ENCODE measurements at regions of chr9 and their contacts with region 1.

Region 1: GRCh38 chr9:4923580-4924544 is 61.2 kb upstream of the JAK2 start:
- DNase-seq: no peak
- ATAC-seq: peak; percentile 92
- H3K4me3 ChIP-seq: no peak overlapping the region
- H3K27ac ChIP-seq: no peak overlapping the region
- H3K4me1 ChIP-seq: peaks cover 7% of the 10 kb centered on the region; the same call in 1 of the 2 replicates
- H3K27me3 ChIP-seq: no peaks in the 10 kb centered on the region
- CTCF ChIP-seq: peak; percentile 55 to 70 (median 55)
- EP300 ChIP-seq: no peak
- POLR2A ChIP-seq: no peak
- RAD21 ChIP-seq: peak; percentile 78

Region 2: DNA sequence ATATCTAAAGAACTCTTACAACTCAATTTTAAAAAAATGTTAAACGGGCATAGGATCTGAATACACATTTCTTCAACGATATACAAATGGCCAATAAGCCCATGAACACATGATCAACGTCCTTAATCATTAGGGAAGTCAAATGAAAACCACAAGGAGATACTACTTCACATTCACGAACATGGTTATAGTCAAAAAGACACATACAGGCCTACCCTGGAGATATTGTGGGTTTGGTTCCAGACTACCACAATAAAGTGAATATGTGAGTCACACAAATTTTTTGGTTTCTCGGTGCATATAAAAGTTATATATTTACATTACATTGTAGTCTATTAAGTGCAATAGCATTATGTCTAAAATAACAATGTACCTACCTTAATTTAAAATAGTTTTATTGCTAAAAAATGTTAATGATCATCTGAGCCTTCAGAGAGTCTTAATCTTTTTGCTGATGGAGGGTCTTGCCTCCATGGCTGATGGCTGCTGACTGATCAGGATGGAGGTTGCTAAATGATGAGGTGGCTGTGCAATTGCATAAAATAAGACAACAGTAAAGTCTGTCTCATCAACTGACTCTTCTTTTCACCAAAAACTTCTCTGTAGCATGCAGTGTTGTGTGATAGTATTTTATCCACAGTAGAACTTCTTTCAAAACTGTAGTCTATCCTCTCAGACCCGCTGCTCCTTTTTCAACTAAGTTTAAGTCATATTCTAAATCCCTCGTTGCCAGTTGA is 198.0 kb before region 1 on chr9:
- CTCF ChIA-PET with region 1: no interaction called
- POLR2A ChIA-PET with region 1: no interaction called
- RAD21 ChIA-PET with region 1: no interaction called
- SMC1A ChIA-PET with region 1: no interaction called
- in situ Hi-C with region 1: no loop called
- intact Hi-C with region 1: no loop called
- DNase-seq: no peak
- ATAC-seq: peak; percentile 42; the same call in 1 of the 3 replicates
- H3K4me3 ChIP-seq: no peak overlapping the region
- H3K27ac ChIP-seq: no peak overlapping the region
- H3K4me1 ChIP-seq: 0 out of 2 replicates have a peak, but pooled peaks cover 4% of the 10 kb centered on the region
- H3K27me3 ChIP-seq: no peaks in the 10 kb centered on the region
- CTCF ChIP-seq: no peak
- EP300 ChIP-seq: no peak
- POLR2A ChIP-seq: no peak
- RAD21 ChIP-seq: no peak

Region 3: DNA sequence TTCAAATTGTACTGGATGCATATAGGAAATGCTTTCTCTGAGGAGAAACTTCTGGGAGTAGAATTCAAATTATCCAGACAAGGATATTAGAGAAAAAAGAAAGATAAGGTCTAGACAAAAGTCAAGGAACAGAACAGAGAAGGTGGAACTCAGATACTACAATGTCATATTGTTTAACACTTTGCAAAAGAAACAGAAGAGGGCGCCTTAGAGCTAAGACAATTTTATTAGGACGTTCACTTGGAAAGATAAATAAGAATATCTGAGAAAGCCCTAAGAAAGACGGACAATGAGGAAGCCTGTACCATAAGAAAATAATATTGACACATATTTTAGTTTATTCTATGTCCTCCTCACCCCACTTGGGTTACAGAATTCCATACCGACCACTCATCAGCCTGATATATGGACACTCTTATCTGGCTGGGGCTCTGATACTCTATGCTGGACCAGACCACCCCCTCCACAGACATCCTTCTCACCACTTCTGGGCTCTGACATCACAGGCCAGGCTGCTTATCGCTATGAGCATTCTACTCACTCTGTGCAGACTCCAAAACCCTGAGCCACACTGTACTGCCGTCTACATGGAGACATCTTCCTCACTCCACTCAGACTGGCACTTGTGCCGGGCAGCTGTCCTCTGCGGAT is 173.7 kb before region 1 on chr9:
- CTCF ChIA-PET with region 1: interaction called, 15 read pairs
- POLR2A ChIA-PET with region 1: no interaction called
- RAD21 ChIA-PET with region 1: interaction called, 3 read pairs
- SMC1A ChIA-PET with region 1: interaction called, 7 read pairs
- in situ Hi-C with region 1: no loop called
- intact Hi-C with region 1: no loop called
- DNase-seq: no peak
- ATAC-seq: peak; percentile 86
- H3K4me3 ChIP-seq: no peak overlapping the region
- H3K27ac ChIP-seq: no peak overlapping the region
- H3K4me1 ChIP-seq: peaks cover 4% of the 10 kb centered on the region; the same call in 1 of the 2 replicates
- H3K27me3 ChIP-seq: no peaks in the 10 kb centered on the region
- CTCF ChIP-seq: peak; percentile 54 to 59 (median 58); a peak in 5 of 6 replicates
- EP300 ChIP-seq: no peak
- POLR2A ChIP-seq: no peak
- RAD21 ChIP-seq: peak; percentile 72

Region 4: GRCh38 chr9:4769321-4770080 is 154.4 kb before region 1 on chr9:
- CTCF ChIA-PET with region 1: interaction called, 15 read pairs
- POLR2A ChIA-PET with region 1: no interaction called
- RAD21 ChIA-PET with region 1: interaction called, 4 read pairs
- SMC1A ChIA-PET with region 1: interaction called, 33 read pairs
- in situ Hi-C with region 1: no loop called
- intact Hi-C with region 1: no loop called
- DNase-seq: no peak
- ATAC-seq: peak; percentile 68
- H3K4me3 ChIP-seq: no peak overlapping the region
- H3K27ac ChIP-seq: no peak overlapping the region
- H3K4me1 ChIP-seq: peaks cover 5% of the 10 kb centered on the region; the same call in 1 of the 2 replicates
- H3K27me3 ChIP-seq: no peaks in the 10 kb centered on the region
- CTCF ChIP-seq: no peak
- EP300 ChIP-seq: no peak
- POLR2A ChIP-seq: no peak
- RAD21 ChIP-seq: no peak

Region 5: GRCh38 chr9:4886698-4887097 is 37.2 kb before region 1 on chr9:
- CTCF ChIA-PET with region 1: interaction called, 13 read pairs
- POLR2A ChIA-PET with region 1: no interaction called
- RAD21 ChIA-PET with region 1: no interaction called
- SMC1A ChIA-PET with region 1: interaction called, 6 read pairs
- in situ Hi-C with region 1: no loop called
- intact Hi-C with region 1: no loop called
- DNase-seq: peak; percentile 75
- ATAC-seq: peak; percentile 98
- H3K4me3 ChIP-seq: no peak overlapping the region
- H3K27ac ChIP-seq: no peak overlapping the region
- H3K4me1 ChIP-seq: peaks cover 11% of the 10 kb centered on the region; the same call in 1 of the 2 replicates
- H3K27me3 ChIP-seq: no peaks in the 10 kb centered on the region
- CTCF ChIP-seq: no peak; a peak in 1 of 6 replicates
- EP300 ChIP-seq: peak in 1 of 2 experiments; percentile 41; a peak in 1 of 4 replicates
- POLR2A ChIP-seq: no peak
- RAD21 ChIP-seq: no peak

Region 6: DNA sequence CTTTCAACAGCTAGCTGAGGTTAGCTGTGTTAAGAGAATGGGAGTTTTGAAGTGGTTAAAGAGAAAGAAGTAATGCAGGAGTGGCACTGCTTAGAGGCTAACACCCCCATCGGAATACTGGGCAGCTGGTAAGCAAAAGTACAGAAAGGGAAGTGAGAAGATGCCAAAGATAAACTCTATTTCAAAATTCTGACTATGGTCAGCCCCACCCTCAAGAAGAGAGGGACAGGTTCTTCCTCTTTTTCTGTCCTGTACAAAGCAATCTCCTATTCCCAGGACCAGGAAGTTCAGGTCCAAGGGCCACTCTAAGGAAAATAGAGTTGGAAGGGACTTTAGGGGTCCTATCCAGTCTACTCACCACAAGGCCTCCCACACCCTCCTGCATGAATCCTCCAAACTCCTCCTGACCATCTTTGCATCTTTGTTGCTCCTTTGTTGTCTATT is 15.3 kb after region 1 on chr9:
- CTCF ChIA-PET with region 1: interaction called, 22 read pairs
- POLR2A ChIA-PET with region 1: interaction called, 8 read pairs
- RAD21 ChIA-PET with region 1: interaction called, 8 read pairs
- SMC1A ChIA-PET with region 1: interaction called, 19 read pairs
- in situ Hi-C with region 1: no loop called
- intact Hi-C with region 1: no loop called
- DNase-seq: peak; percentile 93
- ATAC-seq: peak; percentile 92
- H3K4me3 ChIP-seq: no peak overlapping the region
- H3K27ac ChIP-seq: peak overlapping the region; percentile 78
- H3K4me1 ChIP-seq: peaks cover 52% of the 10 kb centered on the region
- H3K27me3 ChIP-seq: no peaks in the 10 kb centered on the region
- CTCF ChIP-seq: no peak
- EP300 ChIP-seq: peak; percentile 83 to 86
- POLR2A ChIP-seq: no peak
- RAD21 ChIP-seq: no peak

Region 7: DNA sequence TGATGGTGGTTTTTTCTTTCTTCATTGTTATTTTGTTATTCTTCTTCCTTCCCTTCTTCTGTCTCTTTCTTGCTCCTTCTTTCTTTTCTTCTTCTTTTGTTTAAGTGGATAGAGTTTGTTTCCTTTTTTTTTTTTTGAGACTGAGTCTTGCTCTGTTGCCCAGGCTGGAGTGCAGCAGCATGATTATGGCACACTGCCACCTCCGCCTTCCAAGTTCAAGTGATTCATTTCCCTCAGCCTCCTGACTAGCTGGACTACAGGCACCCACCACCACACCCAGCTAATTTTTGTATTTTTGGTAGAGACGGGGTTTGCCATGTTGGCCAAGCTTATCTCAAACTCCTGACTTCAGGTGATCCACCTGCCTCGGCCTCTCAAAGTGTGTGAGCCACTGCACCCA is 101.6 kb after region 1 on chr9:
- CTCF ChIA-PET with region 1: no interaction called
- POLR2A ChIA-PET with region 1: no interaction called
- RAD21 ChIA-PET with region 1: no interaction called
- SMC1A ChIA-PET with region 1: no interaction called
- in situ Hi-C with region 1: no loop called
- intact Hi-C with region 1: no loop called
- DNase-seq: no peak
- ATAC-seq: no peak
- H3K4me3 ChIP-seq: no peak overlapping the region
- H3K27ac ChIP-seq: no peak overlapping the region
- H3K4me1 ChIP-seq: no peaks in the 10 kb centered on the region
- H3K27me3 ChIP-seq: no peaks in the 10 kb centered on the region
- CTCF ChIP-seq: no peak
- EP300 ChIP-seq: no peak
- POLR2A ChIP-seq: no peak
- RAD21 ChIP-seq: no peak